ENCODE measurements at regions of chr7 and their contacts with region 1.

Region 1: DNA sequence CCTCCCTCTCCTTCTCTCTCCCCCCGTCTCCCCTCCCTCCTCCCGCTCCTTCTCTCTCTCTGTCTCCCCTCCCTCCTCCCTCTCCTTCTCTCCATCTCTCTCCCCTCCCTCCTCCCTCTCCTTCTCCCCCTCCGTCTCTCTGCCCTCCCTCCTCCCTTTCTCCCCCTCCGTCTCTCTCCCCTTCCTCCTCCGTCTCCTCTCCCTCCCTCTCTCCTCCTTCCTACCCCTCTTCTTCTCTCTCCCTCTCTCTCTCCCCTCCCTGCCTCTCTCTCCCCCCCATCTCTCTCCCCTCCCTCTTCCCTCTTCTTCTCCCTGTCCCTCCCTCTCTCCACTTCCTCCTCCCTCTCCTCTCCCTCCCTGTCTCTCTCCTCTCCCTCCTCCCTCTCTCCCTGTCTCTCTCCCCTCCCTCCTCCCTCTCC is 32.2 kb downstream of the AP5Z1 start:
- DNase-seq: no peak
- H3K4me3 ChIP-seq: no peak overlapping the region
- H3K27ac ChIP-seq: peak overlapping the region in 1 of 2 donors; percentile 58
- H3K4me1 ChIP-seq: no peaks in the 10 kb centered on the region
- H3K27me3 ChIP-seq: no peaks in the 10 kb centered on the region
- CTCF ChIP-seq: no peak
- POLR2A ChIP-seq: no peak

Region 2: DNA sequence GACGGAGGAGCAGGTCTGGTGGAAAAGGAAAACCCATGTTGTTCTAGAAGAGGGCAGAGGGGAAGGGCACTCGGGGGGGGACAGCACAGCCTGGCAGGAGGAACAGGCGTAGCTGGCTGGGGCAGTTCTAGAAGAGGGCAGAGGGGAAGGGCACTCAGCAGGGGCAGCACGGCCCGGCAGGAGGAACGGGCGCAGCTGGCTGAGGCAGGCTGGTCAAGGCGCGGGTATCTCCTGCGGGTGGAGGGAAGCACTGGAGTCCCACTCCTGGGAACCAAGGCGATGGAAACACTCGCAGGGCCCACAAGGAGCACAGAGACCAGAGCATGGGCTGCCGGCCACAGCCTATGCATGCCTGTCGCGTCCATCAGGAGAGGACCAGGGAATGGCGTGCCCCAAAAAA is 17.5 kb after region 1 on chr7:
- intact Hi-C with region 1: loop called (anchors 1 kb)
- DNase-seq: no peak
- H3K4me3 ChIP-seq: no peak overlapping the region
- H3K27ac ChIP-seq: no peak overlapping the region
- H3K4me1 ChIP-seq: no peaks in the 10 kb centered on the region
- H3K27me3 ChIP-seq: no peaks in the 10 kb centered on the region
- CTCF ChIP-seq: no peak
- POLR2A ChIP-seq: no peak

Measured in breast epithelium (tissue), 4 donors.